B cell (primary cell): ENCODE measurements at regions of chr10 and their contacts with region 1.

Region 1: GRCh38 chr10:73940634-73941221 is 29.8 kb downstream of the PLAU start:
- DNase-seq: peak; percentile 78
- ATAC-seq: peak; percentile 100
- H3K4me3 ChIP-seq: peak overlapping the region in 2 of 5 experiments; percentile 15 to 30
- H3K4me3 Mint-ChIP-seq: peak overlapping the region; percentile 71
- H3K27ac ChIP-seq: no peak overlapping the region
- H3K27ac Mint-ChIP-seq: peak overlapping the region; percentile 50
- H3K4me1 ChIP-seq: peaks cover 0 to 8% of the 10 kb centered on the region in 2 donors
- H3K4me1 Mint-ChIP-seq: peaks cover 7% of the 10 kb centered on the region
- H3K27me3 ChIP-seq: no peaks in the 10 kb centered on the region
- H3K27me3 Mint-ChIP-seq: peaks cover 4% of the 10 kb centered on the region
- CTCF ChIP-seq: peak; percentile 96

Region 2: DNA sequence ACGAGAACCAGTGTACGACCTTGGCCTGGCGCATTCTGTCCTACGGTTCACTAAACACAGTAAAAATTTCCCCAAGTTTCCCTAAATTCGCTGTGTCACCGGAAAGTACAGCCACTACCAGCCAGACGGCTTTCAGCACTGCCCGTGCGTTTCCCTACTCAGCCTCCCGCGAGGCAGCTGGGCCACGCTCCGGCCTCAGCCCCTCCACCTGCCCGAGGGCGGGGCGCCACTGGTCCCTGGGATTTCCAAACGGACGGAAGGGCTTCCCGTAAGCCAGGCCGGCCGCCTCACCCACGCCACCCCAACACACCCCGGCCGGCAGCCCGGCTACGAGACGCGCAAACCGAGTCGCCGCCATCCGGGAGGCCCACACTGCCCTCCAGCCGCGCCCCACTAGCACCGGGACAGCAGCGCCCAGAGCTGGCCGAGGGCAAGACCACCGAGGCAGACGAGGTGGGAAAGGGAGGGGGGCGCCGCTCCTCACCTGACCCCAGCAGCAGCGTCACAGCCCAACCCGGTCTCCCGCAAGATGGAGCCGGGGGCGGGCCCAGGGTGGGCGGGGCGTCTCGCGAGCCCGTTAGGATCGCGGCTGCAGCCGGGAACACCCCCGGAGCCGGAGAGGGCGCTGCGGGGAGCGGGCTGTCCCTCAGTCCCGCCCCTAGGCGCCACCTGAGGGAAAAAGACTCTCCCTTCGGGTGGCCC is 527.0 kb before region 1 on chr10 and contains the start of gene ANXA7:
- CTCF ChIA-PET with region 1: no interaction called
- POLR2A ChIA-PET with region 1: no interaction called
- intact Hi-C with region 1: no loop called
- DNase-seq: peak; percentile 92
- ATAC-seq: peak; percentile 95
- H3K4me3 ChIP-seq: peak within 1 kb of the TSS; percentile 70 to 94 (median 93)
- H3K4me3 Mint-ChIP-seq: peak within 1 kb of the TSS; percentile 96
- H3K27ac ChIP-seq: peak within 1 kb of the TSS; percentile 84 to 97
- H3K27ac Mint-ChIP-seq: peak within 1 kb of the TSS; percentile 96
- H3K4me1 ChIP-seq: peaks cover 15 to 21% of the 10 kb centered on the region in 2 donors
- H3K4me1 Mint-ChIP-seq: peaks cover 50% of the 10 kb centered on the region
- H3K27me3 ChIP-seq: no peaks in the 10 kb centered on the region
- H3K27me3 Mint-ChIP-seq: no peaks in the 10 kb centered on the region
- CTCF ChIP-seq: peak; percentile 37
- total RNA-seq, gene ANXA7: 86.7 and 90.0 TPM in 2 replicates

Region 3: GRCh38 chr10:73772280-73773151 is 168.2 kb before region 1 on chr10:
- CTCF ChIA-PET with region 1: interaction called, 10 read pairs
- POLR2A ChIA-PET with region 1: no interaction called
- intact Hi-C with region 1: loop called (anchors 5 kb)
- DNase-seq: peak; percentile 91
- ATAC-seq: peak; percentile 66
- H3K4me3 ChIP-seq: peak overlapping the region; percentile 66 to 94 (median 89)
- H3K4me3 Mint-ChIP-seq: peak overlapping the region; percentile 97
- H3K27ac ChIP-seq: peak overlapping the region; percentile 85 to 93
- H3K27ac Mint-ChIP-seq: peak overlapping the region; percentile 98
- H3K4me1 ChIP-seq: peaks cover 30 to 47% of the 10 kb centered on the region in 2 donors
- H3K4me1 Mint-ChIP-seq: peaks cover 63% of the 10 kb centered on the region
- H3K27me3 ChIP-seq: no peaks in the 10 kb centered on the region
- H3K27me3 Mint-ChIP-seq: no peaks in the 10 kb centered on the region
- CTCF ChIP-seq: no peak

Region 4: GRCh38 chr10:73854310-73854709 is 86.4 kb before region 1 on chr10:
- CTCF ChIA-PET with region 1: interaction called, 65 read pairs
- POLR2A ChIA-PET with region 1: interaction called, 4 read pairs
- intact Hi-C with region 1: loop called (anchors 1 kb)
- DNase-seq: no peak
- ATAC-seq: no peak
- H3K4me3 ChIP-seq: no peak overlapping the region
- H3K4me3 Mint-ChIP-seq: no peak overlapping the region
- H3K27ac ChIP-seq: no peak overlapping the region
- H3K27ac Mint-ChIP-seq: no peak overlapping the region
- H3K4me1 ChIP-seq: peaks cover 5 to 10% of the 10 kb centered on the region in 2 donors
- H3K4me1 Mint-ChIP-seq: peaks cover 12% of the 10 kb centered on the region
- H3K27me3 ChIP-seq: no peaks in the 10 kb centered on the region
- H3K27me3 Mint-ChIP-seq: no peaks in the 10 kb centered on the region
- CTCF ChIP-seq: no peak

Region 5: DNA sequence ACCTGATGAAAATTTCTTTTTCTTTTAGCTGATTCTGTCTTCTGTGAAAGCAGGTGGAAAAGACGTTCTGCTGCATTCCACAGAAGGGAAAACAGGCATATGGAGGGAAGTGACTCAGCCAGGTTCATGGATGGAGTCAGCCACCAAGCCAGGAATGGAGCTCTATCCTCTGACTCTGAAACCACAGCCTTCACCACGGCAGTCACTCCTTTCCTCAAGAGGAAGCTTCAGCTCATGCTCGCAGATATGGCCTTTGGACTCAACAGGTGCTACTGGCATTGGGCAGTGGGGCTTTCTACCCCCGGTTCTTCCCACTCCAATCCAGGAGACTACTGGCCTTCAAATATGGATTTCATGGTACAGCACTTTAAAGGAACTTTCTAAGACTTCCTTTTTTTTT is 41.3 kb before region 1 on chr10:
- CTCF ChIA-PET with region 1: interaction called, 15 read pairs
- POLR2A ChIA-PET with region 1: no interaction called
- intact Hi-C with region 1: no loop called
- DNase-seq: no peak
- ATAC-seq: no peak
- H3K4me3 ChIP-seq: no peak overlapping the region
- H3K4me3 Mint-ChIP-seq: no peak overlapping the region
- H3K27ac ChIP-seq: no peak overlapping the region
- H3K27ac Mint-ChIP-seq: no peak overlapping the region
- H3K4me1 ChIP-seq: no peaks in the 10 kb centered on the region
- H3K4me1 Mint-ChIP-seq: no peaks in the 10 kb centered on the region
- H3K27me3 ChIP-seq: peaks cover 0 to 8% (median 4%) of the 10 kb centered on the region in 4 experiments
- H3K27me3 Mint-ChIP-seq: peaks cover 11% of the 10 kb centered on the region
- CTCF ChIP-seq: no peak

Region 6: DNA sequence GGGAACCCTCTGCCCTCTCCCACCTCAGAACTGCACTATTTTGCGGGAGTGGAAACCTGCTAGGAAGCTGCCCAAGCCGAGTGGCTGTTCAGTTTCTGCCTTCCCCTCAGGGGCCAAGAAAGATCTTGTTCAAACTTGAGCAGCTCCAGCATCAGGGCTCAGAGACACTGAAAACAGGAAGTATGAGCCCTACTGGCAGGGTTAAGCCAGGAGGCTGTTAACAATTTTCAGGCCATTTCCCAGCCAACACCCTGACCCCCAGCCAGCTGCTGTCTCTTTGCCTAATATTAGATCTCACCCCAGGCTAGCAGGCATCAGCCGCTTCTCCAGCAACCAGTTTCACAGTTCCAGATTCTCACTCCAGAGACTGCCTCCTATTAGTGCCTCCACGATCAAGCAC is 20.6 kb before region 1 on chr10:
- CTCF ChIA-PET with region 1: interaction called, 20 read pairs
- POLR2A ChIA-PET with region 1: interaction called, 3 read pairs
- intact Hi-C with region 1: no loop called
- DNase-seq: peak; percentile 62
- ATAC-seq: peak; percentile 85
- H3K4me3 ChIP-seq: no peak overlapping the region
- H3K4me3 Mint-ChIP-seq: no peak overlapping the region
- H3K27ac ChIP-seq: peak overlapping the region; percentile 1 to 36
- H3K27ac Mint-ChIP-seq: peak overlapping the region; percentile 90
- H3K4me1 ChIP-seq: peaks cover 7 to 13% of the 10 kb centered on the region in 2 donors
- H3K4me1 Mint-ChIP-seq: peaks cover 10% of the 10 kb centered on the region
- H3K27me3 ChIP-seq: no peaks in the 10 kb centered on the region
- H3K27me3 Mint-ChIP-seq: no peaks in the 10 kb centered on the region
- CTCF ChIP-seq: no peak

Region 7: DNA sequence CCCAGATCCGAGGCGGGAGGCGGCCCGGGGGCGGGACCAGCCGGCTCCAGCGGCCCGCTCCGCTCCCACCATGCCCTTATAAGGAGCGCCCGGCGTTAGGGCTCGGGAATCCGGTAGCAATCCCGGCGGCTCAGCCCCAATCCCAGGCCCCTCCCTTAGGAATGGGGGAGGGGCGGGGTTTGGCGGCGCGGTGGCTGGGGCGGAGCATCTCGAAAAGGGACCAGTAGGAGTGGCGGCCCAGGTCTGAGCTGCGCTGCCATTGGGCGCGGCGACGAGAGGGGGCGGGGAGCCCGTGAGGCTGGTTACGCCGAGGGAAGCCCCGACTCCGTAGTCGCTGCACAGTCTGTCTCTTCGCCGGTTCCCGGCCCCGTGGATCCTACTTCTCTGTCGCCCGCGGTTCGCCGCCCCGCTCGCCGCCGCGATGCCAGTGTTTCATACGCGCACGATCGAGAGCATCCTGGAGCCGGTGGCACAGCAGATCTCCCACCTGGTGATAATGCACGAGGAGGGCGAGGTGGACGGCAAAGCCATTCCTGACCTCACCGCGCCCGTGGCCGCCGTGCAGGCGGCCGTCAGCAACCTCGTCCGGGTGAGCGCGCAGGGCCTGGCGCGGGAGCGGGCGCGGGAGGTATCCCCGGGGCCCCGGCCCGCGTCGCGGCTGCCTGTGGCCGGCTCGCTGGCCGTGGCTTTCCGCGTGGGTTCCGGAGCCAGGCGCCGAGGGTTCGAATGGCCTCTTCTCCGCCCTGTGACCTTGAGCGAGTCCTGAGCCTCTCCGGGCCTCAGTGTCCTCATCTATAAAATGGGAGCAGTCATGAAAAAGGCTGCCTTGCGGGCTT is 57.3 kb after region 1 on chr10 and contains the start of gene VCL:
- CTCF ChIA-PET with region 1: interaction called, 16 read pairs
- POLR2A ChIA-PET with region 1: no interaction called
- intact Hi-C with region 1: no loop called
- DNase-seq: peak; percentile 97
- ATAC-seq: peak; percentile 97
- H3K4me3 ChIP-seq: peak within 1 kb of the TSS; percentile 77 to 96 (median 93)
- H3K4me3 Mint-ChIP-seq: peak within 1 kb of the TSS; percentile 99
- H3K27ac ChIP-seq: peak within 1 kb of the TSS; percentile 61 to 89
- H3K27ac Mint-ChIP-seq: peak within 1 kb of the TSS; percentile 96
- H3K4me1 ChIP-seq: peaks cover 20 to 26% of the 10 kb centered on the region in 2 donors
- H3K4me1 Mint-ChIP-seq: peaks cover 45% of the 10 kb centered on the region
- H3K27me3 ChIP-seq: no peaks in the 10 kb centered on the region
- H3K27me3 Mint-ChIP-seq: no peaks in the 10 kb centered on the region
- CTCF ChIP-seq: no peak
- total RNA-seq, gene VCL: 29.8 and 37.0 TPM in 2 replicates

Region 8: GRCh38 chr10:74058658-74059057 is 117.9 kb after region 1 on chr10:
- CTCF ChIA-PET with region 1: interaction called, 14 read pairs
- POLR2A ChIA-PET with region 1: no interaction called
- intact Hi-C with region 1: no loop called
- DNase-seq: peak; percentile 71
- ATAC-seq: peak; percentile 79
- H3K4me3 ChIP-seq: no peak overlapping the region
- H3K4me3 Mint-ChIP-seq: no peak overlapping the region
- H3K27ac ChIP-seq: no peak overlapping the region
- H3K27ac Mint-ChIP-seq: peak overlapping the region; percentile 8
- H3K4me1 ChIP-seq: peaks cover 12 to 13% of the 10 kb centered on the region in 2 donors
- H3K4me1 Mint-ChIP-seq: peaks cover 24% of the 10 kb centered on the region
- H3K27me3 ChIP-seq: no peaks in the 10 kb centered on the region
- H3K27me3 Mint-ChIP-seq: no peaks in the 10 kb centered on the region
- CTCF ChIP-seq: peak; percentile 34

Region 9: DNA sequence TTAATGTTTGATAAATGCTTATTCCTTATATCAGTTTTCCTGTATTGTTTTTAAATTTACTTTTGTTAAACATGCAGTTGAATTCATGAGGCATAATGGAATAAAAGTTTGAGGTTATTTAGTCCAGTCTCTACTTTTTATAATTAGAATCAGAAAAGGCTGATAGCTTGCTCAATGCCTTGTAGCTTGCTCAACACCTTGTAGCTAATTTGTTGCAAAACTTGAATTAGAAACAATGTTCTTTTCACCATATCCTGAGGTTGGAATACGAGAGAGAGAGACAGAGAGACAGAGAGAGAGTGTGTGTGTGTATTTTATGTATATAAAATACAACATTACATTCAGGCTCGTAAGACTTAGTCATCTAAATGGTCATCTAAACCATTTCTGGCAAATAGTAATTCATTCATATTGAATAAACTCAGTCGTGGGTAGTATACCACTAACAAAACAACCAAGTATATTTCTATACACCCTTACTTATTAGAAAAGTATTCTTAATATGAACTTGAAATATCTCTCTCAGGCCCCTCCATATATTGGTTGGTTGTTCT is 453.8 kb after region 1 on chr10:
- CTCF ChIA-PET with region 1: no interaction called
- POLR2A ChIA-PET with region 1: no interaction called
- intact Hi-C with region 1: no loop called
- DNase-seq: no peak
- ATAC-seq: no peak
- H3K4me3 ChIP-seq: no peak overlapping the region
- H3K4me3 Mint-ChIP-seq: no peak overlapping the region
- H3K27ac ChIP-seq: no peak overlapping the region
- H3K27ac Mint-ChIP-seq: no peak overlapping the region
- H3K4me1 ChIP-seq: no peaks in the 10 kb centered on the region
- H3K4me1 Mint-ChIP-seq: peaks cover 11% of the 10 kb centered on the region
- H3K27me3 ChIP-seq: no peaks in the 10 kb centered on the region
- H3K27me3 Mint-ChIP-seq: no peaks in the 10 kb centered on the region
- CTCF ChIP-seq: no peak